Vagina (tissue), 2 donors: ENCODE measurements at regions of chr3 and their contacts with region 1.

Region 1: GRCh38 chr3:158659454-158660237 is 12.8 kb downstream of the LXN start:
- DNase-seq: no peak
- H3K4me3 ChIP-seq: no peak overlapping the region
- H3K27ac ChIP-seq: peak overlapping the region; percentile 43
- H3K4me1 ChIP-seq: no peaks in the 10 kb centered on the region
- H3K27me3 ChIP-seq: no peaks in the 10 kb centered on the region
- CTCF ChIP-seq: peak in 2 of 3 experiments; percentile 63 to 64
- POLR2A ChIP-seq: no peak

Region 2: GRCh38 chr3:157618075-157618760 is 1041.4 kb before region 1 on chr3:
- intact Hi-C with region 1: no loop called
- DNase-seq: no peak
- H3K4me3 ChIP-seq: no peak overlapping the region
- H3K27ac ChIP-seq: no peak overlapping the region
- H3K4me1 ChIP-seq: no peaks in the 10 kb centered on the region
- H3K27me3 ChIP-seq: no peaks in the 10 kb centered on the region
- CTCF ChIP-seq: peak in 2 of 3 experiments; percentile 8 to 50
- POLR2A ChIP-seq: no peak

Region 3: DNA sequence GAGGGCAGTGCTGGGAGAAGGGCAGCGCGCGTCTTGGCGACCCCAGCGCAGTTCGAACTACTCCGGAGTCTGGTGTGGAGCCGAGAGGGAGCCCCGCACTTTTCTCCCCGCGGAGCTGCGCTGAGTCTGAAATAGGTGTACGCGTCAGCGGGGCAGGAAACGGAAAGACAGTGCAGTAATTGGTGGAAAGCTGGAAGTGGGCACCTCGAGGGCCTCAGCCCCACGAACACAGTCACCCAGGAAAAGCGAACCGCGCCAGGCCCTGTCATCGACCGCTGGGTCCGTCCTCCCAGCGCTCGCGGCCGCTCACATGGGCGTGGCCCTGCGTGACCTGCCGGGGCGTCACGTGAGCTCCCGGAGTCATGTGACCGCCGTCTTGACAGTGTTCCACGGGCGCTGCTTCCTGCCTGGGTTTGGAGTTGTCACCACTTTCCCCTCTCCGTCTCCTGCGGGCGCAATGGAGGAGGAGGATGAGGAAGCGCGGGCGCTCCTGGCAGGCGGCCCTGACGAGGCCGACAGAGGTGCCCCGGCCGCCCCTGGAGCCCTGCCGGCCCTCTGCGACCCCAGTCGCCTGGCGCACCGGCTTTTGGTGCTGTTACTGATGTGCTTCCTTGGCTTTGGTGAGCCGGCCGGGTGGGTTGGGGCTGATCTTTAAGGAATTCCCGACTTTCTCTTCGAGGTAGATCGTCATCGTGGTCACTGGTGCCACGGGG is 142.2 kb after region 1 on chr3 and contains the start of gene MFSD1:
- intact Hi-C with region 1: loop called (anchors 10 kb)
- DNase-seq: peak in 1 of 2 donors; percentile 96
- H3K4me3 ChIP-seq: peak within 1 kb of the TSS; percentile 81 to 86
- H3K27ac ChIP-seq: peak within 1 kb of the TSS; percentile 85
- H3K4me1 ChIP-seq: peaks cover 43% of the 10 kb centered on the region
- H3K27me3 ChIP-seq: no peaks in the 10 kb centered on the region
- CTCF ChIP-seq: no peak
- POLR2A ChIP-seq: peak in 1 of 2 donors; percentile 33
- total RNA-seq, gene MFSD1: 59.2 TPM